B cell (primary cell): ENCODE measurements at regions of chr20 and their contacts with region 1.

Region 1: DNA sequence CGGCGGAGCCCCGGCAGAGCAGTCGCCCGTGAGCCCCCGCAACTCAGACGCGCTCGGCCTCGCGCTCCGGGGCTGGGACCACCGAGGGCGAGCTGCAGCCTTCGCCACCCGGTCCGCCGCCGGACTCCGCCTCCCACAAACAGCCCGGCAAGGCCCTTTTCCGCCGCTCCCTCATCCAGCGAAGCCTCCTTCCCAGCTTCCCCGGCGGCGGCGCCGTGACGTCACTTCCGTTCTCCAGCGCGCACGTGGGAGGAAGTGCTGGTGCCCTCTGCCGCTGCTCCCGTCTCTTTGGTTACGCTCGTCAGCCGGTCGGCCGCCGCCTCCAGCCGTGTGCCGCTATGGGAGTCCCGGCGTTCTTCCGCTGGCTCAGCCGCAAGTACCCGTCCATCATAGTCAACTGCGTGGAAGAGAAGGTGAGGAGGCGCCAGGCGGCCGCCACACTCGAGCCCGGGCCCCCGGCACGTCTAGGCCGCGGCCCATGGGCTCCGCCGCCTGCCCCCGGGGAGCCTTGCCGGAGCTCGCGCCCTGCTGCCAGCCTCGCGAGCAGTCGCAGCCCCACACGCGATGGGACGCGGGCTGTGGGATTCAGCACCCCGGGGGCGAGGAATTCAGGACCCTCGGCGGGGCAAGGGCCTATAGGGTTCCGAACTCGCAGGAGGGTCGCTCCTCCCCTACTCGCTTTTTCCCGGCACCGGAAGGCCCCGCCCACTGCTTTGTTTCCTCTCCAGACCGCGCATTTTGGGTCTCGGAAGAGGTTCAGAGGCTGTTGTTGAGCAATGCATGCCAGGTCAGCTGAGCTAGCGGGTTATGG is at the start of gene XRN2:
- DNase-seq: peak; percentile 96
- ATAC-seq: peak; percentile 84
- H3K4me3 ChIP-seq: peak within 1 kb of the TSS; percentile 66 to 93 (median 85)
- H3K4me3 Mint-ChIP-seq: peak within 1 kb of the TSS; percentile 99
- H3K27ac ChIP-seq: peak within 1 kb of the TSS; percentile 71 to 91
- H3K27ac Mint-ChIP-seq: peak within 1 kb of the TSS; percentile 99
- H3K4me1 ChIP-seq: peaks cover 17 to 21% of the 10 kb centered on the region in 2 donors
- H3K4me1 Mint-ChIP-seq: peaks cover 29% of the 10 kb centered on the region
- H3K27me3 ChIP-seq: no peaks in the 10 kb centered on the region
- H3K27me3 Mint-ChIP-seq: no peaks in the 10 kb centered on the region
- CTCF ChIP-seq: no peak
- total RNA-seq, gene XRN2: 42.1 and 46.2 TPM in 2 replicates

Region 2: DNA sequence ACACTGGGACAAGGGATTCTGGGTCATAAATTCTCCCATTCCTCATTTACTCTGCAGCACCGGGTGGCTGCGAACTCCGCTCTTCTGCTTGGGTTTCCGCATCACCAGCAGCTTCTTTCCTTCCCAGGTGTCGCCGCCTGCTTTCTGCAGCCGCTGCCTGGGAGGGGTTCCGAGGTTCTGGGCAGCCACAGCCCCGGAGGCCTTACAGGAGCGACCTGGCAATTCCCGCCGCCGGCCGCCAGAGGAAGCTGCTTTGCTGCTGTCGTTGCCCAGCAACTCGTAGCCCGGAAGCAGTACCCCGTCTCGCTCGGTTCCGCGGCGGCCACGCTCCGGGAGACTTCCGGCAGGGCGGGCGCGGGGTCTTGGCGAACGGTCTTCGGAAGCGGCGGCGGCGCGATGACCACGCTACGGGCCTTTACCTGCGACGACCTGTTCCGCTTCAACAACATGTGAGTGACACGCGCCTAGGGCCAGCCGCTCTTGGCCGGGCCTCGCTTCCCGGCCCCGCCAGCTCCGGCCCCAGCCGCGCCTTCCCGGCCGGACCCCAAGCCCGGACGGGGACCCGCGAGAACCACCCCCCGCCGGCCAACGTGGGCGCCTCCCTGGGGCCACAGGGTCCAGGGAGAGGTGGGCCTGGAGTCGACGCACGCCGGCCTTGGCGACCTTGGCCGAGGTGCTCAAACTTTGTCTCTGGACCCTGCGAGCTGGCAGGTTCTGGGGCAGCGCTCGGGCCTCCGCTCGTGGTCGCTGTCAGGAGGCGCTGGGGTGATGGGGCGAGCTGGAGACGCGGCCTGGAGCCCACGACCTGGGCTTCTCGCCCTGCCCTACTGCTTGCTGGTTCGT is 1286.0 kb before region 1 on chr20 and contains the start of gene NAA20:
- CTCF ChIA-PET with region 1: no interaction called
- POLR2A ChIA-PET with region 1: no interaction called
- intact Hi-C with region 1: loop called (anchors 5 kb)
- DNase-seq: peak; percentile 91
- ATAC-seq: peak; percentile 98
- H3K4me3 ChIP-seq: peak within 1 kb of the TSS; percentile 41 to 91 (median 83)
- H3K4me3 Mint-ChIP-seq: peak within 1 kb of the TSS; percentile 94
- H3K27ac ChIP-seq: peak within 1 kb of the TSS; percentile 1 to 86
- H3K27ac Mint-ChIP-seq: peak within 1 kb of the TSS; percentile 94
- H3K4me1 ChIP-seq: peaks cover 12 to 27% of the 10 kb centered on the region in 2 donors
- H3K4me1 Mint-ChIP-seq: peaks cover 42% of the 10 kb centered on the region
- H3K27me3 ChIP-seq: no peaks in the 10 kb centered on the region
- H3K27me3 Mint-ChIP-seq: no peaks in the 10 kb centered on the region
- CTCF ChIP-seq: peak; percentile 73
- total RNA-seq, gene NAA20: 25.5 and 27.1 TPM in 2 replicates

Region 3: GRCh38 chr20:20052074-20052970 is 1250.9 kb before region 1 on chr20 and contains the starts of genes CFAP61 and CRNKL1:
- CTCF ChIA-PET with region 1: no interaction called
- POLR2A ChIA-PET with region 1: no interaction called
- intact Hi-C with region 1: loop called (anchors 5 kb)
- DNase-seq: peak; percentile 99
- ATAC-seq: peak; percentile 93
- H3K4me3 ChIP-seq: peak within 1 kb of the TSS; percentile 85 to 98 (median 97)
- H3K4me3 Mint-ChIP-seq: peak within 1 kb of the TSS; percentile 99
- H3K27ac ChIP-seq: peak within 1 kb of the TSS; percentile 78 to 91
- H3K27ac Mint-ChIP-seq: peak within 1 kb of the TSS; percentile 97
- H3K4me1 ChIP-seq: peaks cover 7 to 14% of the 10 kb centered on the region in 2 donors
- H3K4me1 Mint-ChIP-seq: peaks cover 23% of the 10 kb centered on the region
- H3K27me3 ChIP-seq: peaks cover 0 to 9% (median 5%) of the 10 kb centered on the region in 4 experiments
- H3K27me3 Mint-ChIP-seq: peaks cover 7% of the 10 kb centered on the region
- CTCF ChIP-seq: no peak
- total RNA-seq, gene CFAP61: not detected in 2 replicates
- total RNA-seq, gene CRNKL1: 25.5 and 32.1 TPM in 2 replicates

Region 4: GRCh38 chr20:20712474-20713243 is 590.6 kb before region 1 on chr20 and contains the start of gene RALGAPA2:
- CTCF ChIA-PET with region 1: no interaction called
- POLR2A ChIA-PET with region 1: no interaction called
- intact Hi-C with region 1: loop called (anchors 5 kb)
- DNase-seq: peak; percentile 97
- ATAC-seq: peak; percentile 95
- H3K4me3 ChIP-seq: peak within 1 kb of the TSS; percentile 78 to 96 (median 91)
- H3K4me3 Mint-ChIP-seq: peak within 1 kb of the TSS; percentile 95
- H3K27ac ChIP-seq: peak within 1 kb of the TSS; percentile 90 to 96
- H3K27ac Mint-ChIP-seq: peak within 1 kb of the TSS; percentile 97
- H3K4me1 ChIP-seq: peaks cover 19 to 20% of the 10 kb centered on the region in 2 donors
- H3K4me1 Mint-ChIP-seq: peaks cover 25% of the 10 kb centered on the region
- H3K27me3 ChIP-seq: peaks cover 0 to 3% (median 0%) of the 10 kb centered on the region in 4 experiments
- H3K27me3 Mint-ChIP-seq: no peaks in the 10 kb centered on the region
- CTCF ChIP-seq: no peak
- total RNA-seq, gene RALGAPA2: 32.2 and 33.1 TPM in 2 replicates

Region 5: GRCh38 chr20:21125849-21126580 is 177.3 kb before region 1 on chr20 and contains the start of gene KIZ:
- CTCF ChIA-PET with region 1: no interaction called
- POLR2A ChIA-PET with region 1: no interaction called
- intact Hi-C with region 1: loop called (anchors 5 kb)
- DNase-seq: peak; percentile 97
- ATAC-seq: peak; percentile 96
- H3K4me3 ChIP-seq: peak within 1 kb of the TSS; percentile 50 to 90 (median 76)
- H3K4me3 Mint-ChIP-seq: peak within 1 kb of the TSS; percentile 91
- H3K27ac ChIP-seq: peak within 1 kb of the TSS; percentile 63 to 79
- H3K27ac Mint-ChIP-seq: peak within 1 kb of the TSS; percentile 88
- H3K4me1 ChIP-seq: peaks cover 14 to 16% of the 10 kb centered on the region in 2 donors
- H3K4me1 Mint-ChIP-seq: peaks cover 21% of the 10 kb centered on the region
- H3K27me3 ChIP-seq: no peaks in the 10 kb centered on the region
- H3K27me3 Mint-ChIP-seq: peaks cover 4% of the 10 kb centered on the region
- CTCF ChIP-seq: peak; percentile 53
- total RNA-seq, gene KIZ: 36.3 and 40.4 TPM in 2 replicates

Region 6: GRCh38 chr20:21395666-21396598 is 92.7 kb after region 1 on chr20:
- CTCF ChIA-PET with region 1: no interaction called
- POLR2A ChIA-PET with region 1: no interaction called
- intact Hi-C with region 1: loop called (anchors 10 kb)
- DNase-seq: peak; percentile 65
- ATAC-seq: no peak
- H3K4me3 ChIP-seq: peak overlapping the region in 1 of 5 experiments; percentile 3
- H3K4me3 Mint-ChIP-seq: peak overlapping the region; percentile 63
- H3K27ac ChIP-seq: no peak overlapping the region
- H3K27ac Mint-ChIP-seq: no peak overlapping the region
- H3K4me1 ChIP-seq: peaks cover 12 to 30% of the 10 kb centered on the region in 2 donors
- H3K4me1 Mint-ChIP-seq: peaks cover 21% of the 10 kb centered on the region
- H3K27me3 ChIP-seq: peaks cover 6 to 71% (median 48%) of the 10 kb centered on the region in 4 experiments
- H3K27me3 Mint-ChIP-seq: peaks cover 63% of the 10 kb centered on the region
- CTCF ChIP-seq: no peak